Aorta (tissue), 5 donors: ENCODE measurements at regions of chr20 and their contacts with region 1.

Region 1: GRCh38 chr20:2692036-2692885 is at the start of gene EBF4:
- DNase-seq: peak; percentile 57 to 88
- ATAC-seq: peak; percentile 53
- H3K4me3 ChIP-seq: peak within 1 kb of the TSS; percentile 68 to 81
- H3K27ac ChIP-seq: peak within 1 kb of the TSS; percentile 7 to 53
- H3K4me1 ChIP-seq: no peaks in the 10 kb centered on the region
- H3K27me3 ChIP-seq: no peaks in the 10 kb centered on the region
- total RNA-seq, gene EBF4: 16.7 to 19.9 TPM

Region 2: GRCh38 chr20:2585811-2586210 is 106.5 kb before region 1 on chr20:
- intact Hi-C with region 1: no loop called
- DNase-seq: no peak
- ATAC-seq: no peak
- H3K4me3 ChIP-seq: no peak overlapping the region
- H3K27ac ChIP-seq: no peak overlapping the region
- H3K4me1 ChIP-seq: no peaks in the 10 kb centered on the region
- H3K27me3 ChIP-seq: no peaks in the 10 kb centered on the region

Region 3: DNA sequence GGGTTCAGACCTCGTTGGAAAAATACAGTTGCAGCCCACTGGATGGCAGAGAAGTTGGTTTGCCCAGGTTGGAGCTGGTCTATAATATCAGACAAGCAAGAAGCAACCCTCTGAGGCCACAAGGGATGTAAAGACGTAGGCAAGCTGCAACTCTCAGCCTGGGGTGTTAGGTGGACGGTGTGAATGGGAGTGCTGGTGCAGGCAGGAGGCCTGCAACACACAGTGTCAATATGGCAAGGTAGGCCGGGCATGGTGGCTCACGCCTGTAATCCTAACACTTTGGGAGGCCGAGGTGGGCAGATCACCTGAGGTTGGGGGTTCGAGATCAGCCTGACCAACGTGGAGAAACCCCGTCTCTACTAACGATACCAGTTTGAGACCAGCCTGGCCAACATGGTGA is 158.8 kb after region 1 on chr20:
- intact Hi-C with region 1: loop called in 1 of 2 experiments (anchors 5 kb)
- DNase-seq: no peak
- ATAC-seq: no peak
- H3K4me3 ChIP-seq: no peak overlapping the region
- H3K27ac ChIP-seq: no peak overlapping the region
- H3K4me1 ChIP-seq: no peaks in the 10 kb centered on the region
- H3K27me3 ChIP-seq: no peaks in the 10 kb centered on the region